ENCODE measurements at regions of chr2 and their contacts with region 1.

Region 1: GRCh38 chr2:177263451-177264208 is 897 bp downstream of the NFE2L2 start:
- H3K4me3 Mint-ChIP-seq: peak overlapping the region; percentile 88
- H3K27ac Mint-ChIP-seq: peak overlapping the region; percentile 100
- H3K4me1 Mint-ChIP-seq: peaks cover 19% of the 10 kb centered on the region
- H3K27me3 Mint-ChIP-seq: no peaks in the 10 kb centered on the region

Region 2: GRCh38 chr2:177148477-177149154 is 115.0 kb before region 1 on chr2:
- intact Hi-C with region 1: no loop called
- H3K4me3 Mint-ChIP-seq: peak overlapping the region; percentile 81
- H3K27ac Mint-ChIP-seq: no peak overlapping the region
- H3K4me1 Mint-ChIP-seq: peaks cover 10% of the 10 kb centered on the region
- H3K27me3 Mint-ChIP-seq: peaks cover 29% of the 10 kb centered on the region

Region 3: GRCh38 chr2:177229448-177230242 is 34.0 kb before region 1 on chr2:
- intact Hi-C with region 1: loop called (anchors 5 kb)
- H3K4me3 Mint-ChIP-seq: no peak overlapping the region
- H3K27ac Mint-ChIP-seq: peak overlapping the region; percentile 64
- H3K4me1 Mint-ChIP-seq: peaks cover 50% of the 10 kb centered on the region
- H3K27me3 Mint-ChIP-seq: no peaks in the 10 kb centered on the region

Region 4: DNA sequence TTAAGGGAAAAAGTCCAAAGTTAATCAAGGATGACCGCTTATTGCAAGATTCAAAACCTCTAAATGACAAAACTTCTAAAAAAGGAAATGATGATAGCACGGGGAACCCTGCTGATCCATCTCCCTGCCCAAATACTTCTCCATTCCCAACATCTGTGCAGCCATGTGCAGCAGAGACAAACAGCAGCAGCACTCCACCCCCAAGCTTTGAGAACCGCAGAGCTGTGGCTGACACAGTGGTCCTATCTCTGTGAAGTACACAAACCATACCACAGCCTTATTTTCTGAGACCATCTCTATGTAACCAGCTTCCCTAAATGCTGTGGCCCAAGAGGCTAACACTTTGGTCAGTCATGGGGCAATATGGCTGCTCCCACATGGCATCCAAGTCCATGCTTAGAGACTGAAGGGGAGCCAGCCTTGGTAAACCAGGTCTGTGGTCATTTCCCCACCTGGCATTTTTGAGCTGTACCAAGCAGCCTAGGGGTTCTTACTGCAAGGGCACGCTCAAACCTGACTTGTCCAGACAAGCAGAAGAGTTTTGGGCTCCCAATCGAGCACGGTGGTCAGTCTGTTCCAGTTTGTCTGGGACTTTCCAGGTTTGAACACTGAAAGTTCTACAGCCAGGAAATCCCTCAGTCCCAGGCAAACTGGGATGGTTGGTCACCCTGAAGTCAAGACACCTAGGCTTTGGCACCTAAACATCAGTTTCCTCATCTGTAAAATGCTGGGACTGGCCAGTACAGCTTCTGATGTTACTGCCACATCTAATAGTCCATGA is 18.0 kb after region 1 on chr2:
- intact Hi-C with region 1: loop called (anchors 2 kb)
- H3K4me3 Mint-ChIP-seq: no peak overlapping the region
- H3K27ac Mint-ChIP-seq: peak overlapping the region; percentile 78
- H3K4me1 Mint-ChIP-seq: peaks cover 34% of the 10 kb centered on the region
- H3K27me3 Mint-ChIP-seq: no peaks in the 10 kb centered on the region

Region 5: GRCh38 chr2:177332041-177332991 is 68.7 kb after region 1 on chr2:
- intact Hi-C with region 1: loop called (anchors 1 kb)
- H3K4me3 Mint-ChIP-seq: no peak overlapping the region
- H3K27ac Mint-ChIP-seq: peak overlapping the region; percentile 32
- H3K4me1 Mint-ChIP-seq: peaks cover 30% of the 10 kb centered on the region
- H3K27me3 Mint-ChIP-seq: no peaks in the 10 kb centered on the region